HCT116 (cell line): ENCODE measurements at regions of chr15 and their contacts with region 1.

Region 1: DNA sequence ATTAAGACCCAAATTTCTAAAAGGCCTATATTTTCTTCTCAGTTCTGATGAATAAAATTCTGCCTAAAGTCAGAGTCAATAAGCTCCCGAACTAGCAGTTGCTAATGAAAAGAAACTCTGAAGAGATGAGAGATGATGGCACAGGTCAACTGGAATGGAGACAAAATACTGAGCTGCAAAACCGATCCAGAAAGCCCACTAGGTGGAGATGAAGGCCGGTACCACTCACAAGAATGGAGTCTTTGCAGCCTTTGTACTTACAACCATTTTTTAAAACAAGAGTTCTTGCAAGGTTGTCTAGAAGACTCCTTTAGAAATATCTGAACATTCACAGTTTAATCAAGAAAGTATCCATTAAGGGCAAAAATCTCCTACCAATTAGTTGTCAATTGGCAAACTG is 119.9 kb upstream of the TJP1 start:
- DNase-seq: no peak
- ATAC-seq: peak; percentile 68
- H3K4me3 ChIP-seq: no peak overlapping the region
- H3K27ac ChIP-seq: no peak overlapping the region
- H3K4me1 ChIP-seq: peaks cover 0 to 20% of the 10 kb centered on the region in 2 experiments; a peak in 2 of 4 replicates
- H3K27me3 ChIP-seq: no peaks in the 10 kb centered on the region
- CTCF ChIP-seq: peak; percentile 8 to 41 (median 35); a peak in 5 of 6 replicates
- POLR2A ChIP-seq: no peak
- RAD21 ChIP-seq: peak; percentile 28; the same call in 1 of the 2 replicates

Region 2: DNA sequence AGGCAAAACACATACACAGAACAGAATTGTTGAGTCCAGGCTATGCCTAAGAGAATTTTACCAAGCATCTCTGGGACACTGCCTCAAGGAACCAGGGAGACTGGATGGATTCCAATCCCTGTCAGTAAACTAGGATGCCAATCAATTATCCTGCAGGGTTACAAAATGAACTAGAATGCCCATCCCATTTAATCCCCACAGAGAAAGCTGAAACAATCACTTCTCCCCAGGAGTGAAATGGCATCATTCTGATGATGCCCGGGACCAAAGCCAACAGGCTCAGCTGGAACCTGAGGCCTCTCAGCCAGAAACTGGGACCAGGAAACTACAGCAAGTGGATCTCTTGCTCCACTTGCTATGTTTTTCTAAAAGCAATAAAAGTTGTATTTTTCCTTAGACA is 10.1 kb after region 1 on chr15:
- CTCF ChIA-PET with region 1: no interaction called
- POLR2A ChIA-PET with region 1: no interaction called
- RAD21 ChIA-PET with region 1: no interaction called
- intact Hi-C with region 1: no loop called
- DNase-seq: no peak
- ATAC-seq: no peak
- H3K4me3 ChIP-seq: no peak overlapping the region
- H3K27ac ChIP-seq: no peak overlapping the region
- H3K4me1 ChIP-seq: no peaks in the 10 kb centered on the region
- H3K27me3 ChIP-seq: no peaks in the 10 kb centered on the region
- CTCF ChIP-seq: no peak
- POLR2A ChIP-seq: no peak
- RAD21 ChIP-seq: no peak

Region 3: DNA sequence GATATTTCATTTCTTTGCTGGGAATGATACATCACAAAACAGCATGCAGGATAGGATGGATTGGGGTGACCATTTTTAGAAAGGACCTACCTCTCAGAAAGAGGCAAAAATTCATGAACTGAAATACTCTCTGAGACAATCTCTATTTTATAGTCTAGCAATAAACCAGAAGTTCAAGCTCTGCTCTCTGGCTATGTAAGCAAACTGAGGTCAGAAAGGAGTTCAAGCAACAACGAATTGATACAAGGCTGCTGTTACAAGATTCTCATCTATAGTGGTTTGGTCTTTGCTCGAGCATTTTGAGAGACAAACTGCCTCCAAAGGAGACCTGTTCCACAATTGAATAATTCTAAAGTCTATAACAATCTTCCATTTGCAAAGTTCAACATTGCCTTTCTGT is 55.9 kb after region 1 on chr15:
- CTCF ChIA-PET with region 1: no interaction called
- POLR2A ChIA-PET with region 1: no interaction called
- RAD21 ChIA-PET with region 1: no interaction called
- intact Hi-C with region 1: loop called (anchors 5 kb)
- DNase-seq: no peak
- ATAC-seq: no peak
- H3K4me3 ChIP-seq: no peak overlapping the region
- H3K27ac ChIP-seq: no peak overlapping the region
- H3K4me1 ChIP-seq: no peaks in the 10 kb centered on the region
- H3K27me3 ChIP-seq: no peaks in the 10 kb centered on the region
- CTCF ChIP-seq: no peak
- POLR2A ChIP-seq: no peak
- RAD21 ChIP-seq: no peak

Region 4: DNA sequence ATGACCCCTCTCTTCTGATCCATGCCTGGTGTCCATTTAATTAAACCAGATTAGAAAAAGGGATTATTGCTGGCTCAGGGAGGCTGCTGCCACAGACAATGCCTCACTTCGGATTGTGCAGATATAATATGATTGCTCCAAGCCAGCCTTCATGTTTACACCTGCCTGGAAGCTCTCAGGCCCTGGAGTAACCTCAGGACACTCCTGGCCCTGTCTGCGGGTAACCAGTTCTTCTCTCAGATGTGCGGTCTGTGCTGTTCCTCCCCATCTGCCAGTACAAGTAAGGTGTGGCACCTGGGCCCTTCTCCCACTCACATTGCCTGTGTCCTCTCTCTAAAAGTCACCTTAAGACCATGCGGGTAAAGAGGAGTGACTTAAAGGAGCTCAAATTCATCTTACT is 131.8 kb after region 1 on chr15:
- CTCF ChIA-PET with region 1: interaction called, 11 read pairs
- POLR2A ChIA-PET with region 1: no interaction called
- RAD21 ChIA-PET with region 1: no interaction called
- intact Hi-C with region 1: no loop called
- DNase-seq: no peak
- ATAC-seq: no peak
- H3K4me3 ChIP-seq: no peak overlapping the region
- H3K27ac ChIP-seq: no peak overlapping the region
- H3K4me1 ChIP-seq: 0 out of 4 replicates have a peak, but pooled peaks cover 0 to 2% of the 10 kb centered on the region in 2 experiments
- H3K27me3 ChIP-seq: no peaks in the 10 kb centered on the region
- CTCF ChIP-seq: no peak
- POLR2A ChIP-seq: no peak
- RAD21 ChIP-seq: no peak